PC-9 (cell line): ENCODE measurements at regions of chr21 and their contacts with region 1.

Region 1: GRCh38 chr21:38805328-38806152 is at the start of gene ETS2:
- DNase-seq: peak; percentile 69 to 83
- H3K4me3 ChIP-seq: peak within 1 kb of the TSS; percentile 79
- H3K27ac ChIP-seq: peak within 1 kb of the TSS; percentile 95
- H3K4me1 ChIP-seq: peaks cover 33% of the 10 kb centered on the region
- H3K27me3 ChIP-seq: no peaks in the 10 kb centered on the region
- CTCF ChIP-seq: 0 out of 2 replicates have a peak, but pooled peaks have one; percentile 9
- total RNA-seq, gene ETS2: 20.4 and 25.2 TPM in 2 replicates

Region 2: GRCh38 chr21:38733973-38734546 is 71.5 kb before region 1 on chr21:
- CTCF ChIA-PET with region 1: no interaction called
- POLR2A ChIA-PET with region 1: no interaction called
- intact Hi-C with region 1: loop called (anchors 1 kb)
- DNase-seq: peak; percentile 44 to 81
- H3K4me3 ChIP-seq: no peak overlapping the region
- H3K27ac ChIP-seq: no peak overlapping the region
- H3K4me1 ChIP-seq: no peaks in the 10 kb centered on the region
- H3K27me3 ChIP-seq: no peaks in the 10 kb centered on the region
- CTCF ChIP-seq: peak; percentile 89

Region 3: GRCh38 chr21:38819714-38820183 is 14.2 kb after region 1 on chr21:
- CTCF ChIA-PET with region 1: interaction called, 25 read pairs
- POLR2A ChIA-PET with region 1: interaction called, 48 read pairs
- intact Hi-C with region 1: loop called (anchors 1 kb)
- DNase-seq: peak; percentile 82 to 91
- H3K4me3 ChIP-seq: peak overlapping the region; percentile 16; the same call in 1 of the 2 replicates
- H3K27ac ChIP-seq: peak overlapping the region; percentile 91
- H3K4me1 ChIP-seq: peaks cover 26% of the 10 kb centered on the region
- H3K27me3 ChIP-seq: no peaks in the 10 kb centered on the region
- CTCF ChIP-seq: no peak

Region 4: GRCh38 chr21:38913120-38913892 is 107.8 kb after region 1 on chr21:
- CTCF ChIA-PET with region 1: interaction called, 4 read pairs
- POLR2A ChIA-PET with region 1: no interaction called
- intact Hi-C with region 1: loop called (anchors 2 kb)
- DNase-seq: peak; percentile 85 to 87
- H3K4me3 ChIP-seq: peak overlapping the region; percentile 48; the same call in 1 of the 2 replicates
- H3K27ac ChIP-seq: peak overlapping the region; percentile 77
- H3K4me1 ChIP-seq: peaks cover 48% of the 10 kb centered on the region
- H3K27me3 ChIP-seq: no peaks in the 10 kb centered on the region
- CTCF ChIP-seq: no peak

Region 5: DNA sequence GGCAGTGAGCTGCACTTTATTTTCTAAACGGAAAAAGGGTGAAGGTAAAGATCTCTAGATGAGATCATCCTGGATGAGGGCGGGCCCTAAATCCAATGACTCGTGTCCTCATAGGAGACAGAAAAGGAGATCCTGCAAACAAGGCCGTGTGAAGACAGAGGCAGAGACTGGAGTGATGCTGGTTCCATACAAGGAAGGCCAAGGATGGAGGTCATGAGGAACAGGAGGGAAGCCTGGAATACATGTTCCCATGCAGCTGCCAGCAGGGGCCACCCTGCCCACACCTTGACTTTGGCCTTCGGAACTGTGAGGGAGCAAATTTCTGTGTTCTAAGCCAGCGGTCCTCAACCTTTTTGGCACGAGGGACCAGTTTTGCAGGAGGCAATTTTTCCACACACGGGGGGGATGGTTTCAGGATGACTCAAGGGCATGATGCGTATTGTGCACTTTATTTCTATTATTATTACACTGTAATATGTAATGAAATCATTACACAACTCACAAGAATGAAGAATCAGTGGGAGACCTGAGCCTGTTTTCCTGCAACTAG is 283.4 kb after region 1 on chr21:
- CTCF ChIA-PET with region 1: no interaction called
- POLR2A ChIA-PET with region 1: interaction called, 10 read pairs
- intact Hi-C with region 1: no loop called
- DNase-seq: no peak
- H3K4me3 ChIP-seq: no peak overlapping the region
- H3K27ac ChIP-seq: no peak overlapping the region
- H3K4me1 ChIP-seq: no peaks in the 10 kb centered on the region
- H3K27me3 ChIP-seq: no peaks in the 10 kb centered on the region
- CTCF ChIP-seq: no peak